ENCODE measurements at regions of chr12 and their contacts with region 1.

Region 1: GRCh38 chr12:44827832-44828438 is 48.2 kb downstream of the NELL2 start:
- DNase-seq: no peak
- ATAC-seq: peak; percentile 85
- H3K4me3 Mint-ChIP-seq: peak overlapping the region; percentile 71
- H3K27ac Mint-ChIP-seq: peak overlapping the region; percentile 91
- H3K4me1 Mint-ChIP-seq: peaks cover 73% of the 10 kb centered on the region
- H3K27me3 Mint-ChIP-seq: no peaks in the 10 kb centered on the region
- CTCF ChIP-seq: no peak

Region 2: DNA sequence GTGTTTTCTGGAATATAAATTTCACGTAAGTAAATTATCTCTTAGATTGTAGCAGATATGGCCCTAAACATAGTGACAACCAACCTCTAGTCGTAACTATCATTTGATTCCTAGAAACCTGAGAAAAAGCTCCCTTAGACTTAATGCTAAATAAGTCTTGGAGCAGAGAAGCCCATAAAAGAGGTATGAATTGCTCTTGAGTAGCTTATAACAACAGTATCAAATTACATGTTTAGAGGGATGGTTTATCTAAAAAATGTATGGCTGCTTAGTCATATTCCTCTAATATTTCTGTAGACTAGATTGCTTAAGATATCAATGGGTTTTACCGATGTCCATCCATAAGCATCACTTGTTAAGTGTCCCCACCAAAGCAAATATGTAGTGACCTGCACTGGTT is 211.6 kb before region 1 on chr12:
- CTCF ChIA-PET with region 1: no interaction called
- POLR2A ChIA-PET with region 1: no interaction called
- intact Hi-C with region 1: no loop called
- DNase-seq: no peak
- ATAC-seq: no peak
- H3K4me3 Mint-ChIP-seq: no peak overlapping the region
- H3K27ac Mint-ChIP-seq: no peak overlapping the region
- H3K4me1 Mint-ChIP-seq: peaks cover 11% of the 10 kb centered on the region
- H3K27me3 Mint-ChIP-seq: no peaks in the 10 kb centered on the region
- CTCF ChIP-seq: no peak

Region 3: DNA sequence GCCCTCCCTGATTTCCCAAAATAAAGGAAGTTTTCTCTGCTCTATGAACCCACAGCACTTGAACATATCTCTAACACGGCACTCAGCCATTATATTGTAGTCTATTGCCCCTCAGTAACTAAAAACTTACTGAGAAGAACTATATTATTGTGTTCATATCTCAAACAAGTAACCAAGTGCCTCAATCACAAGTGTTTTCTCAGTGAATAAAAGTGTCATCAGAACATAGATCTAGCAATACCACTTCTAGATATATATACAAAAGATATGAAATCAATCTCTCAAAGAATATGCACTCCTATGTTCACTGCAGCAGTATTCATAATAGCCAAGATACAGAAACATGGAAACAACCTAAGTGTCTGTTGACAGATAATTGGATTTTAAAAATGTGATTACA is 89.9 kb before region 1 on chr12:
- CTCF ChIA-PET with region 1: no interaction called
- POLR2A ChIA-PET with region 1: no interaction called
- intact Hi-C with region 1: no loop called
- DNase-seq: no peak
- ATAC-seq: no peak
- H3K4me3 Mint-ChIP-seq: no peak overlapping the region
- H3K27ac Mint-ChIP-seq: no peak overlapping the region
- H3K4me1 Mint-ChIP-seq: peaks cover 5% of the 10 kb centered on the region
- H3K27me3 Mint-ChIP-seq: no peaks in the 10 kb centered on the region
- CTCF ChIP-seq: no peak

Region 4: GRCh38 chr12:44842669-44843068 is 14.7 kb after region 1 on chr12:
- CTCF ChIA-PET with region 1: interaction called, 7 read pairs
- POLR2A ChIA-PET with region 1: interaction called, 37 read pairs
- intact Hi-C with region 1: no loop called
- DNase-seq: peak; percentile 48
- ATAC-seq: peak; percentile 61
- H3K4me3 Mint-ChIP-seq: peak overlapping the region; percentile 74
- H3K27ac Mint-ChIP-seq: peak overlapping the region; percentile 92
- H3K4me1 Mint-ChIP-seq: peaks cover 72% of the 10 kb centered on the region
- H3K27me3 Mint-ChIP-seq: no peaks in the 10 kb centered on the region
- CTCF ChIP-seq: no peak

Measured in activated CD8-positive, alpha-beta T cell treated with anti-CD3 and anti-CD28 coated beads for 36 hours (primary cell).